Activated T-helper 1 cell treated with anti-CD3 and anti-CD28 coated beads, Interleukin-12 subunit alpha, Interleukin-12 subunit beta, Interleukin-2, Interleukin-4 antibody, amounts not matched to agents 30 ng/mL and 10 ng/mL and 1 ng/mL, durations not matched to agents 14 hours and 24 hours and 36 hours (primary cell): ENCODE measurements at regions of chr1 and their contacts with region 1.

Region 1: DNA sequence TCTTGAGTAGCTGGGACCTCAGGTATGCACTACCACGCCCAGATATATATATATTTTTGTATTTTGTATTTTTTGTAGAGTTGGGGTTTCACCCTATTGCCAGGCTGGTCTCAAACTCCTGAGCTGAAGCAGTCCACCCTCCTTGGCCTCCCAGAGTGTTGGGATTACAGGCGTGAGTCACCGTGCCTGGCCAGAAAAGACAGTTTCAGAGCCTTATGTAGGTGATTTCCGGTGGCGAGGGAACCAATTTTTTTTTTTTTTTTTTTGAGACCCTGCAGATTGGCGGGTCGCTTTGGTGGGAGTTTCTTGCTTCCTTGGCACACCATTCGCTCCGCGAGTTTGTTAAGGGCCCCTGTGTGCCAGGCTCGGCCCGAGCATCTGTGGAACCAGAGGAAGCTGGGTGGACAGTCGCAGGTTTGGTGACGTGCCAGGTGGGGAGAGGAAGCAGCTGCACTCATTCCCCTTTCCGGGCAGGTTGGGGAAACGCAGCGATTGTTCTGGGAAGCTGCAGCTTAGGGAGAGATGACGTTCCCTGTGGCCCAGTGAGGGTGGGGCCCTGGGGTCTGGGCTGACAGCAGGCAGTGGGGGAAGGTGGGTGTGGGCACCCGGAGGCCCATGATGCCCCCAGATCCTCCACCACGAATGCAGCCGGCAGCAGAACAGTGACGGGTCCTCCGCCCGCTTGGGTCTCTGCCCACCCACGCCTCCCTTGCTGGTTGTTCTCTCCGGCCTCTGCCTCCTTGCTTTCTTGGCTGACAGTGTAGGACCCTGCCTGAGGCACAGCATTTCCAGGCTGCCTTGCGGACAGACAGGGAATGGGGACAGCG is 25.1 kb downstream of the SPSB1 start:
- DNase-seq: no peak
- H3K4me3 Mint-ChIP-seq: peak overlapping the region; percentile 66
- H3K27ac Mint-ChIP-seq: peak overlapping the region; percentile 79
- H3K4me1 Mint-ChIP-seq: peaks cover 63% of the 10 kb centered on the region
- H3K27me3 Mint-ChIP-seq: no peaks in the 10 kb centered on the region

Region 2: GRCh38 chr1:9267352-9267686 is 50.5 kb before region 1 on chr1:
- intact Hi-C with region 1: loop called (anchors 1 kb)
- DNase-seq: no peak
- H3K4me3 Mint-ChIP-seq: no peak overlapping the region
- H3K27ac Mint-ChIP-seq: no peak overlapping the region
- H3K4me1 Mint-ChIP-seq: peaks cover 5% of the 10 kb centered on the region
- H3K27me3 Mint-ChIP-seq: no peaks in the 10 kb centered on the region

Region 3: GRCh38 chr1:9275567-9276034 is 42.2 kb before region 1 on chr1:
- intact Hi-C with region 1: loop called (anchors 1 kb)
- DNase-seq: peak; percentile 58
- H3K4me3 Mint-ChIP-seq: peak overlapping the region; percentile 45
- H3K27ac Mint-ChIP-seq: peak overlapping the region; percentile 65
- H3K4me1 Mint-ChIP-seq: peaks cover 39% of the 10 kb centered on the region
- H3K27me3 Mint-ChIP-seq: peaks cover 2% of the 10 kb centered on the region

Region 4: GRCh38 chr1:9413148-9413876 is 95.5 kb after region 1 on chr1:
- intact Hi-C with region 1: loop called (anchors 1 kb)
- DNase-seq: peak; percentile 52
- H3K4me3 Mint-ChIP-seq: peak overlapping the region; percentile 57
- H3K27ac Mint-ChIP-seq: peak overlapping the region; percentile 82
- H3K4me1 Mint-ChIP-seq: peaks cover 50% of the 10 kb centered on the region
- H3K27me3 Mint-ChIP-seq: peaks cover 11% of the 10 kb centered on the region